Activated CD4-positive, alpha-beta T cell treated with anti-CD3 and anti-CD28 coated beads, Interleukin-2, amount 10 ng/mL, durations not matched to agents 24 days and 14 days (primary cell): ENCODE measurements at regions of chr2 and their contacts with region 1.

Region 1: GRCh38 chr2:128090945-128091725 is at the start of gene UGGT1:
- DNase-seq: peak; percentile 98
- H3K4me3 Mint-ChIP-seq: peak within 1 kb of the TSS; percentile 89
- H3K27ac Mint-ChIP-seq: peak within 1 kb of the TSS; percentile 93
- H3K4me1 Mint-ChIP-seq: peaks cover 23% of the 10 kb centered on the region
- H3K27me3 Mint-ChIP-seq: no peaks in the 10 kb centered on the region
- total RNA-seq, gene UGGT1: 69.9 and 72.1 TPM in 2 replicates

Region 2: GRCh38 chr2:127884436-127885345 is 206.4 kb before region 1 on chr2:
- intact Hi-C with region 1: loop called (anchors 10 kb)
- DNase-seq: no peak
- H3K4me3 Mint-ChIP-seq: peak overlapping the region; percentile 95
- H3K27ac Mint-ChIP-seq: peak overlapping the region; percentile 76
- H3K4me1 Mint-ChIP-seq: peaks cover 40% of the 10 kb centered on the region
- H3K27me3 Mint-ChIP-seq: no peaks in the 10 kb centered on the region